ENCODE measurements at regions of chr6 and their contacts with region 1.

Region 1: GRCh38 chr6:78954740-78955139 is 87.4 kb downstream of the IRAK1BP1 start:
- DNase-seq: no peak
- ATAC-seq: no peak
- H3K4me3 ChIP-seq: no peak overlapping the region
- H3K27ac ChIP-seq: no peak overlapping the region
- H3K4me1 ChIP-seq: no peaks in the 10 kb centered on the region
- H3K27me3 ChIP-seq: no peaks in the 10 kb centered on the region
- CTCF ChIP-seq: no peak
- POLR2A ChIP-seq: no peak
- RAD21 ChIP-seq: no peak

Region 2: GRCh38 chr6:79005024-79005423 is 50.3 kb after region 1 on chr6:
- CTCF ChIA-PET with region 1: no interaction called
- POLR2A ChIA-PET with region 1: no interaction called
- dilution Hi-C with region 1: no loop called
- in situ Hi-C with region 1: no loop called
- intact Hi-C with region 1: loop called (anchors 5 kb)
- DNase-seq: peak; percentile 2
- ATAC-seq: no peak
- H3K4me3 ChIP-seq: no peak overlapping the region
- H3K27ac ChIP-seq: no peak overlapping the region
- H3K4me1 ChIP-seq: no peaks in the 10 kb centered on the region
- H3K27me3 ChIP-seq: no peaks in the 10 kb centered on the region
- CTCF ChIP-seq: no peak
- POLR2A ChIP-seq: no peak
- RAD21 ChIP-seq: no peak

Region 3: GRCh38 chr6:79421707-79422484 is 467.2 kb after region 1 on chr6:
- CTCF ChIA-PET with region 1: no interaction called
- POLR2A ChIA-PET with region 1: no interaction called
- dilution Hi-C with region 1: no loop called
- in situ Hi-C with region 1: no loop called
- intact Hi-C with region 1: no loop called
- DNase-seq: peak; percentile 92
- ATAC-seq: peak; percentile 78
- H3K4me3 ChIP-seq: no peak overlapping the region
- H3K27ac ChIP-seq: no peak overlapping the region
- H3K4me1 ChIP-seq: peaks cover 2% of the 10 kb centered on the region
- H3K27me3 ChIP-seq: peaks cover 4% of the 10 kb centered on the region
- CTCF ChIP-seq: no peak
- POLR2A ChIP-seq: no peak
- RAD21 ChIP-seq: no peak

Measured in IMR-90 (cell line).